GM18951 (cell line): ENCODE measurements at regions of chr20 and their contacts with region 1.

Region 1: GRCh38 chr20:38658879-38659596 is 57.4 kb downstream of the ARHGAP40 start:
- POLR2A ChIP-seq: no peak

Region 2: DNA sequence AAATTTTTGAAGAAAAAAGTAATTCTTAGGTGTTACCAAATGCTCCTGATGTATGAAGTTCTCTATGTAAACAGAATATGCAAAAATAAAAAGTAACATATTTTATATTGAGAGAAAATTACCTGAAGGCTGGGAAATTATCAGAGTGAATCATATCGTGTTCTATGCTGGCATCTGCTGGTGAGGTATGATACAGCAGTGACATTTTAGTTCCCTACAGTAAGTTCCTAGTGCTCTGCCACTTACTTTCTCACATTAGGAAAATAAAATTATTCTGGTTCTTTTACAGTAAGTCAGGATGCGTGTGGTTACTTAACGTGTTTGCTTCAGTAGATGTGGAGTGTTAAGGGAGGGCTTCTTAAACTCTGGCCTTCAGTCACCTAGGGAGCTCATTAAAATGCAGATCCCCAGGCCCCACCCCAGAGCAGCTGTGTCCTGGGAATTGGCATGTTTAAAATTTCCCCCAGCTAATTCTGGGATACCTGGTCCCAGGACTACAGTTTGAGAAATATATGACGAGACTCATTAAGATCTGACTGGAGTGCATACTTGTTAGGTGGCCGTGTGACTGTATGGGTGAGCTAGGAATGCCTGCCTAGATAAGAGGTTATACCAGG is 92.4 kb after region 1 on chr20:
- in situ Hi-C with region 1: loop called (anchors 10 kb)
- POLR2A ChIP-seq: no peak